Naive thymus-derived CD4-positive, alpha-beta T cell (primary cell): ENCODE measurements at regions of chr12 and their contacts with region 1.

Region 1: GRCh38 chr12:41277116-41277945 is 89.2 kb downstream of the PDZRN4 start:
- DNase-seq: peak in 5 of 9 donors; percentile 4 to 9 (median 6)
- ATAC-seq: peak; percentile 49
- H3K4me3 ChIP-seq: no peak overlapping the region
- H3K4me3 Mint-ChIP-seq: no peak overlapping the region
- H3K27ac ChIP-seq: no peak overlapping the region
- H3K27ac Mint-ChIP-seq: no peak overlapping the region
- H3K4me1 ChIP-seq: no peaks in the 10 kb centered on the region
- H3K4me1 Mint-ChIP-seq: no peaks in the 10 kb centered on the region
- H3K27me3 ChIP-seq: peaks cover 0 to 4% of the 10 kb centered on the region in 2 donors
- H3K27me3 Mint-ChIP-seq: peaks cover 0 to 12% (median 8%) of the 10 kb centered on the region in 5 donors

Region 2: GRCh38 chr12:41011939-41012338 is 265.4 kb before region 1 on chr12:
- CTCF ChIA-PET with region 1: no interaction called
- POLR2A ChIA-PET with region 1: no interaction called
- intact Hi-C with region 1: no loop called
- DNase-seq: no peak
- ATAC-seq: no peak
- H3K4me3 ChIP-seq: no peak overlapping the region
- H3K4me3 Mint-ChIP-seq: no peak overlapping the region
- H3K27ac ChIP-seq: no peak overlapping the region
- H3K27ac Mint-ChIP-seq: no peak overlapping the region
- H3K4me1 ChIP-seq: no peaks in the 10 kb centered on the region
- H3K4me1 Mint-ChIP-seq: no peaks in the 10 kb centered on the region
- H3K27me3 ChIP-seq: no peaks in the 10 kb centered on the region
- H3K27me3 Mint-ChIP-seq: no peaks in the 10 kb centered on the region

Region 3: DNA sequence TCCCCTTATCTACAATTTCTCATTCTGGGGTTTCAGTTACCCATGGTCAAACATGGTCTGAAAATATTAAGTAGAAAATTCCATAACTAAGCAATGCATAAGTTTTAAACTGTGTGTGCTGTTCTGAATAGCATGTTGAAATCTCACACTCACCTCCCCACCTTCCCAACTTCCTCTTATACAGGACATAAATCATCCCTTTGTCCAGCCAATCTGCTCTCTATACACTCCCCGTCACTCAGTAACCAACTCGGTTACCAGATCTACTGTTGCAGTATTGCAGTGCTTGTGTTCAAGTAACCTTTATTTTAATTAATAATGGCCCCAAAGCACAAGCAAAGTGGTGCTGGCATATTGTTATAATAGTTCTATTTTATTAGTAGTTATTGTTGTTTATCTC is 446.9 kb after region 1 on chr12:
- CTCF ChIA-PET with region 1: no interaction called
- POLR2A ChIA-PET with region 1: no interaction called
- intact Hi-C with region 1: no loop called
- DNase-seq: no peak
- ATAC-seq: no peak
- H3K4me3 ChIP-seq: no peak overlapping the region
- H3K4me3 Mint-ChIP-seq: no peak overlapping the region
- H3K27ac ChIP-seq: no peak overlapping the region
- H3K27ac Mint-ChIP-seq: no peak overlapping the region
- H3K4me1 ChIP-seq: no peaks in the 10 kb centered on the region
- H3K4me1 Mint-ChIP-seq: no peaks in the 10 kb centered on the region
- H3K27me3 ChIP-seq: no peaks in the 10 kb centered on the region
- H3K27me3 Mint-ChIP-seq: peaks cover 0 to 14% (median 4%) of the 10 kb centered on the region in 5 donors

Region 4: DNA sequence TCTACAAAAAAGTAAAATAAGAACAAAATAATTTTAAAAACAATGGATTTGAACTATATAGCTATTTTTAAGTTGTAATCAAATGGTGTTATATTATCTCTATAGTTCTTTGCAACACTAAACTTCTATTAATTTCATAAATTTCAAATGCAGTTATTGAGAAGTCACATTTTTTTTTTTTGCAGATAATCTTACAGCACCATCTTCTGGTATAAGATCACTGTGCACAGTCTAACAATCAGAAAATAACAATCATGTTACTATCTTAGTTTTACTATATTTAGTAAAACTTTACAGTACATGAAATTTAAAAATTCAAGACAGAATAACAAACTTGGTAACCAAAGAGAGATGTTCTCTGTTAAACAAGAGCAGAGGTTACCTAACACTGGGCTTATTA is 826.8 kb after region 1 on chr12:
- CTCF ChIA-PET with region 1: interaction called, 3 read pairs
- POLR2A ChIA-PET with region 1: no interaction called
- intact Hi-C with region 1: loop called (anchors 2 to 10 kb)
- DNase-seq: no peak
- ATAC-seq: peak; percentile 44
- H3K4me3 ChIP-seq: no peak overlapping the region
- H3K4me3 Mint-ChIP-seq: no peak overlapping the region
- H3K27ac ChIP-seq: no peak overlapping the region
- H3K27ac Mint-ChIP-seq: peak overlapping the region in 5 of 9 donors; percentile 20 to 87 (median 64)
- H3K4me1 ChIP-seq: no peaks in the 10 kb centered on the region
- H3K4me1 Mint-ChIP-seq: peaks cover 0 to 11% (median 5%) of the 10 kb centered on the region in 7 donors
- H3K27me3 ChIP-seq: no peaks in the 10 kb centered on the region
- H3K27me3 Mint-ChIP-seq: no peaks in the 10 kb centered on the region

Region 5: GRCh38 chr12:42332301-42333285 is 1055.3 kb after region 1 on chr12:
- CTCF ChIA-PET with region 1: no interaction called
- POLR2A ChIA-PET with region 1: no interaction called
- intact Hi-C with region 1: loop called in 1 of 2 experiments (anchors 5 kb)
- DNase-seq: peak in 7 of 9 donors; percentile 12 to 54 (median 42)
- ATAC-seq: peak; percentile 77
- H3K4me3 ChIP-seq: no peak overlapping the region
- H3K4me3 Mint-ChIP-seq: peak overlapping the region in 3 of 10 donors; percentile 7 to 30 (median 14)
- H3K27ac ChIP-seq: no peak overlapping the region
- H3K27ac Mint-ChIP-seq: peak overlapping the region in 1 of 9 donors; percentile 2
- H3K4me1 ChIP-seq: peaks cover 5 to 31% of the 10 kb centered on the region in 2 donors
- H3K4me1 Mint-ChIP-seq: peaks cover 47 to 87% (median 73%) of the 10 kb centered on the region in 7 donors
- H3K27me3 ChIP-seq: no peaks in the 10 kb centered on the region
- H3K27me3 Mint-ChIP-seq: no peaks in the 10 kb centered on the region

Region 6: DNA sequence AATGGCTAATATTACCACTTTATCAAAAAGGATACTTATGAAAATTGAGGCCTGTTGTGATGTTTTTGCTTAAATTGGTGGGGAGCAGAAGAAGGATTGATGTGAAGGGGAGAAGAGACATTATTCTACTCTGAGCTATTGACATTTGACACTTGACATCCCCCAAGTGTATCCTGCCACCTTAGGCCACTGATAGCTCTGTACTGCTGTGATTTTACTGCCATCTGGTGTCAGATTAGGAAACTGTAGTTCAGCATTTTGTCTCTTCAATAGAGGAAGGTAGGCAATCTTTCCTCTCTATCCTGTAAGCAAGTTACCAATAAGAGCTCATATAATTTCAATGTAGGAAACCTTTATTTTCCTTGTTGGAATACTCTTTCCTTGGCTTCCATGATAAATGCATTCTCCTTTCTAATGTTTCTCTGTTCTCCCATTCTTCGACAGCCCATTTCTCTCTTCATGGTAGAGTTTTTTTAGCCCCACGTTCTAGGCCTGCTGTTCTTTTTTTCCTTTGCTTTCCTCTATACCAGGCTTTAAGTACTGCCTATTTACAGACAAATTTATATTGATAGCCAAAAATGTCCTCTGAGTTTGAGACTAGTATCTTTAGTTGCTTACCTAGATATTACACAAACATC is 1094.9 kb after region 1 on chr12:
- CTCF ChIA-PET with region 1: interaction called, 3 read pairs
- POLR2A ChIA-PET with region 1: no interaction called
- intact Hi-C with region 1: loop called in 1 of 2 experiments (anchors 5 kb)
- DNase-seq: peak in 7 of 9 donors; percentile 26 to 61 (median 49)
- ATAC-seq: peak; percentile 93
- H3K4me3 ChIP-seq: no peak overlapping the region
- H3K4me3 Mint-ChIP-seq: no peak overlapping the region
- H3K27ac ChIP-seq: no peak overlapping the region
- H3K27ac Mint-ChIP-seq: no peak overlapping the region
- H3K4me1 ChIP-seq: no peaks in the 10 kb centered on the region
- H3K4me1 Mint-ChIP-seq: peaks cover 4 to 32% (median 15%) of the 10 kb centered on the region in 7 donors
- H3K27me3 ChIP-seq: no peaks in the 10 kb centered on the region
- H3K27me3 Mint-ChIP-seq: no peaks in the 10 kb centered on the region

Region 7: DNA sequence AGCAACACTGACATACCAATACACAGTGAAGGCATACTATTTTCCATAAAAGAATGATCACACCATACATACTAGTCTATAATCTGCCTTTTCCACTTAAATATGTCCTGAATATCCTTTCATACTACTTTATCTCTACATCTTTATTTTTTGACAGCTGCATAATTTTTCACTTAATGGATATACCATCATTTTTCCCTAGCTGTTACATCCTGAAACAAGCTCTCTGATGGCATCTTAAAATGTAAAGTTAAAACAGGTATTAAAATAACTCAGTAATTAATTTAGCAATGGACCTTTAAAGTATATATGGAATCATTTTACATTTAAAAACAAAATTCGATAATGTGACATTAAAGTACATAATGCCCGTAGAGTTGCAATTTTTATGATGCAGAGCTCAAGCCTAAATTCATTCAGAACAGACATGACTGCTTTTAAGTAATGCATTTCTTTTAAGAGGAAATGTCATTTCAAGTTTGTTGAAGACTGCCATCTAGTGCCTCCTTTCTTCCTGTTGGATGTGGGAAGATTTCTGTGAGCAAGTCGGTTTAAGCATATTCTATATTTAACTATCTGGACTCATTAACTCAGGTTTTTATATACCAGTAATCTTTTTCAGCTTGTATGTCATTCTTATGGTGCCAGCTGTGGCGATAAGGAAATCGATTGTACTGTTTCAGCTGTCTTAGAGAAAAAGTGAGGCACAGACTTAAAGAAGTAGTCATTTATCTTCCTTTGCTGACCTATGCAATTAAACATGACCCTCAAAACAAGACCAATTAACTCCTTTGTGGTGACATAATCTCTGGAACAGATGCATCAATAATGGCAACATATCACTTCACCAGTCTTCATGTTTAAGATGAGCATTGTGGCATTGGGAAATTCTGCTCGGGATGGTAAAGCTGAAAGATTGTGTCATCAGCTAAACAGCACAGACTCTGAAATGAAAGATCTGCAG is 1291.9 kb after region 1 on chr12:
- CTCF ChIA-PET with region 1: no interaction called
- POLR2A ChIA-PET with region 1: no interaction called
- intact Hi-C with region 1: loop called in 1 of 2 experiments (anchors 2 kb)
- DNase-seq: peak in 1 of 9 donors; percentile 16
- ATAC-seq: no peak
- H3K4me3 ChIP-seq: no peak overlapping the region
- H3K4me3 Mint-ChIP-seq: no peak overlapping the region
- H3K27ac ChIP-seq: no peak overlapping the region
- H3K27ac Mint-ChIP-seq: no peak overlapping the region
- H3K4me1 ChIP-seq: no peaks in the 10 kb centered on the region
- H3K4me1 Mint-ChIP-seq: no peaks in the 10 kb centered on the region
- H3K27me3 ChIP-seq: no peaks in the 10 kb centered on the region
- H3K27me3 Mint-ChIP-seq: peaks cover 0 to 17% (median 8%) of the 10 kb centered on the region in 5 donors